Posterior vena cava (tissue), 2 donors: ENCODE measurements at regions of chr2 and their contacts with region 1.

Region 1: GRCh38 chr2:200466425-200467418 is 43.1 kb downstream of the KCTD18 start:
- DNase-seq: no peak

Region 2: GRCh38 chr2:200306196-200306930 is 160.4 kb before region 1 on chr2 and contains the start of gene SPATS2L:
- intact Hi-C with region 1: loop called in 1 of 2 experiments (anchors 10 kb)
- DNase-seq: peak; percentile 94
- total RNA-seq, gene SPATS2L: 68.7 to 76.6 TPM

Region 3: GRCh38 chr2:200498402-200499162 is 31.9 kb after region 1 on chr2:
- intact Hi-C with region 1: no loop called
- DNase-seq: no peak